PC-3 (cell line): ENCODE measurements at regions of chr1 and their contacts with region 1.

Region 1: DNA sequence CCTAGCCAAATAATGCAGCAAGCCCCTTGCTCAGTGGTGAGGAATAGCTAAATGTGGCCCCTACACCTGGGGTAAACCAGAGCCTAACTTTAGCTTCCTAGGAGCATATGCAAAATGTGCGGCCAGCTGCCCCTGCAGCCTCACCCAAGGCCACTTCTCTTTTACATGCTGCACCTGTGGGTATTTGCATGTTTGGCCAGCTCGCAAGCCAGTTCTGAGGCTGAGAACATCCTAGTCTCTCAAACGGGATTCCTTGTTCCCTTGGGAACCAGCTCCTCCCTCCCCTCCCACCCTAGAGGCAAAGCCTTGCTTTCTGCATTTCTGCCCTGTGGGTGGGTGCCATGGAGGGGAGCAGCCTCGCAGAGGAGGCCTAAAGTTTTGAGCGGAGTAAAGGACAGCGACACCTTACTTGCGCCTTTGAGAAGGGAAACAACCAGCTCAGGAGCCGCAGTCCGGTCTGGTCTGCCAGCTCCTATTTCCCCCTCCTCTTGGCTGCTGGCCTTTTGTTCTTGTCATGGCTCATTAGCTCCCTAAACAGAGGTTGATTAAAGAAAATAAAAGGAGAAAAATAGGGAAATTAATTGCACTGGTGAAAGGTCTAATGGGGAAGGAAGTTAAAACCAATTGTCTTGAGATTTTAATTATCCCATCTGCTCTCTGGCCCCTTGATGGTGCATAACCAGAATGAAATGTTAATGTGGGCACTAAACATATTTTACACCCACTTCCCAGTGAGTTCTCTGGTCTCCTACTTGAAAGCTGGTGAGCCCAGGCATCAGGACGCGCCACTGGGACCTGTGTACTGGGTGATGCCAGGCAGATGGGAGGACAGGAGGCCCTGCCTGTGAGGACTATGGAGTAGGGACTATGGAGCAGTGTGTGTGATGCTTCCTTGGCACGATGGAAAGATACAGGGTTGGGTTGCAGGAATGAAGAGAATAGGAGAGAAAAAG is 68.7 kb downstream of the TEX35 start:
- DNase-seq: no peak
- ATAC-seq: no peak
- H3K4me3 ChIP-seq: no peak overlapping the region
- H3K27ac ChIP-seq: no peak overlapping the region
- H3K4me1 ChIP-seq: no peaks in the 10 kb centered on the region
- H3K27me3 ChIP-seq: no peaks in the 10 kb centered on the region
- CTCF ChIP-seq: no peak

Region 2: DNA sequence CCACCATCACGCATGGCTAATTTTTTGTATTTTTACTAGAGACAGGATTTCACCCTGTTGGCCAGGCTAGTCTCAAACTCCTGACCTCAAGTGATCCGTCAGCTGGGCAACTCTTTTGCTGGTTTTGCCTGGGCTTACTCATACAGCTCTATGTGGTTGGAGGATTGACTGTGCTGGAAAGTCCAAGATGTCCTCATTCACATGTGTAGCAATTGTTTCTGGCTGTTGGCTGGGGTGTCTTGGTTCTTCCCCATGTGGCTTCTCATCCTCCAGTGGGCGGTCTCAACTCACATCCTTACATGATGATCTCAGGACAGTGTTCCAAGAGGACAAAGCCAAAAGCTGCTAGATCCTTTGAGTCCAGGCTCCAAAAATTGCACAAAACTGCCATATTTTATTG is 15.4 kb before region 1 on chr1:
- CTCF ChIA-PET with region 1: no interaction called
- POLR2A ChIA-PET with region 1: no interaction called
- intact Hi-C with region 1: no loop called
- DNase-seq: no peak
- ATAC-seq: no peak
- H3K4me3 ChIP-seq: no peak overlapping the region
- H3K27ac ChIP-seq: no peak overlapping the region
- H3K4me1 ChIP-seq: no peaks in the 10 kb centered on the region
- H3K27me3 ChIP-seq: no peaks in the 10 kb centered on the region
- CTCF ChIP-seq: no peak

Region 3: GRCh38 chr1:178706432-178706831 is 124.8 kb after region 1 on chr1:
- CTCF ChIA-PET with region 1: no interaction called
- POLR2A ChIA-PET with region 1: interaction called, 12 read pairs
- intact Hi-C with region 1: no loop called
- DNase-seq: no peak
- ATAC-seq: no peak
- H3K4me3 ChIP-seq: no peak overlapping the region
- H3K27ac ChIP-seq: no peak overlapping the region
- H3K4me1 ChIP-seq: peaks cover 5% of the 10 kb centered on the region
- H3K27me3 ChIP-seq: no peaks in the 10 kb centered on the region
- CTCF ChIP-seq: no peak